ENCODE measurements at regions of chr1 and their contacts with region 1.

Region 1: DNA sequence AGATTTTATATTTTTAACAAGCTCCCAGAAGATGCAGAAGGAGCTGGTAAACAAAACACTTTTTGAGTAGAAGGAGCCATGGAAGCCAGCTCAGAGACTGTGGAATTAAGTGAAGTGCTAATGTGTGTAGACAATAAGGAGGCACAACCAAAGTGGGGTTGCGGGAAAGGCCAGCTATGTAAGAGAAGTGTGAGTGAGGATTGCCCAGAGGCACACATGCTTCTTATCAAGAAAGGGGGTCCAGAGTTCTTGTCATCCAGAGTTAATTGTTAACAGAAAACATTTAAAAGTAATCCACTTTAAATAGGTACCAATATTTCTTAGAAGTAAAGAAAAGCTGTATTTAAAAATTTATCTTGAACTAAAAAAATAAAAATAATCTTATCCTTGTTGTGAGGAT is 136.8 kb downstream of the OLFM3 start:
- DNase-seq: no peak
- H3K4me3 Mint-ChIP-seq: no peak overlapping the region
- H3K27ac Mint-ChIP-seq: no peak overlapping the region
- H3K4me1 Mint-ChIP-seq: no peaks in the 10 kb centered on the region
- H3K27me3 Mint-ChIP-seq: peaks cover 49% of the 10 kb centered on the region
- CTCF ChIP-seq: no peak

Region 2: GRCh38 chr1:101769520-101769919 is 90.4 kb before region 1 on chr1:
- CTCF ChIA-PET with region 1: no interaction called
- POLR2A ChIA-PET with region 1: no interaction called
- intact Hi-C with region 1: no loop called
- DNase-seq: peak; percentile 40
- H3K4me3 Mint-ChIP-seq: no peak overlapping the region
- H3K27ac Mint-ChIP-seq: no peak overlapping the region
- H3K4me1 Mint-ChIP-seq: no peaks in the 10 kb centered on the region
- H3K27me3 Mint-ChIP-seq: peaks cover 51% of the 10 kb centered on the region
- CTCF ChIP-seq: peak; percentile 44

Region 3: DNA sequence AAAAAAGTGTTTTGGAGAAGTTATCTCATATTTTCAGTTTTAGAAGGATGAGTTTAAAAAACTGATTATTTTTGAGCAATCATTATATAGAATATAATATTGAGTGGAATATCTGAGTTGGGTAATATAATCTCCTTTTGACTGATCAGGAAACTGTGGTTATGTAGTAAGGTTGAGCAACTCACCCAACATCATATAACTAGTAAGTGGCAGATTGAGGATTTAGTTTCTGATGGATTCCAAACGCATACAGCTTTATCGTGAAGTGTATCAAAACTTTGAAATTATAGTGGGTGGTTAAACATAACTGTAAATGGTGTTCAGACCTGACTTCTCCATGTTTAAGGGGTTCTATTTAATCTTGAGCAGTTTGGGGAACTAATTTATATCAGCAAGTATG is 38.2 kb after region 1 on chr1:
- CTCF ChIA-PET with region 1: no interaction called
- POLR2A ChIA-PET with region 1: no interaction called
- intact Hi-C with region 1: loop called (anchors 5 kb)
- DNase-seq: no peak
- H3K4me3 Mint-ChIP-seq: no peak overlapping the region
- H3K27ac Mint-ChIP-seq: no peak overlapping the region
- H3K4me1 Mint-ChIP-seq: no peaks in the 10 kb centered on the region
- H3K27me3 Mint-ChIP-seq: peaks cover 9% of the 10 kb centered on the region
- CTCF ChIP-seq: no peak

Measured in MCF 10A (cell line).